A549 (cell line): ENCODE measurements at regions of chr17 and their contacts with region 1.

Region 1: DNA sequence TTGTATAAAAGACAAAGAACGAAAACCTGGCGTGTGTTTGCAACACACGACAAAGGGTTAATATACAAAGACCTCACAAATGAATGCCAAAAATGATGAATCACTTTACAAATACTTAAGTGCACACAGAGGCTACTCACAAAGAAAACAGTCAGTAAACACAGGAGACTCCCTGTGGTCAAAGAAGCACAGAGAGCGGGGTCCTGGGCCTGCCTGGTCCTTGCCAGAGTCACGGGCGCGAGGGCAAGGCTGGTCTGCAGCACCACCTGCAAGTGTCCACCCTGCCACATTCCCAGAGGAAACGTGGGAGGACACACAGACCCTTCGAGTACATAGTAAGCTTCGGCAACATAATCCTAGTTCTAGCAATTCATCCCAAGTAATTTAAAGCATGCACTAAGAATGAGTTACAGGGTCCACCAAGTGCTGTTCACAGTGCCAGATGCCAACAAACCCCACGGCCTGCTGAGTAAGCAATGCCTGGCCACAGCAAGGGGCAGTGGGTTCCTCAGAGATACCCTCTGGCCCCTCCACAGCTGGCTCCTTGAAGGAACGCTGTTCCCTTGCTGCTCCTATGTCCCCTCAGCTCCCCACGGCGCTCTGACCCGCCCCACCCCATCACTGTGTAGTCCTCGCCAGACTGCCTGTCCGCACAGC is 24.6 kb upstream of the FAAP100 start:
- DNase-seq: peak; percentile 89 to 99
- ATAC-seq: peak; percentile 86 to 91
- H3K4me3 ChIP-seq: peak overlapping the region; percentile 21; the same call in 2 of the 3 replicates
- H3K27ac ChIP-seq: peak overlapping the region; percentile 93 to 95
- H3K4me1 ChIP-seq: peaks cover 76% of the 10 kb centered on the region
- CTCF ChIP-seq: 0 out of 3 replicates have a peak, but pooled peaks have one; percentile 13
- EP300 ChIP-seq: peak in 1 of 2 experiments; percentile 67; a peak in 2 of 5 replicates
- POLR2A ChIP-seq: no peak
- RAD21 ChIP-seq: peak; percentile 43 to 57; a peak in 4 of 5 replicates

Region 2: DNA sequence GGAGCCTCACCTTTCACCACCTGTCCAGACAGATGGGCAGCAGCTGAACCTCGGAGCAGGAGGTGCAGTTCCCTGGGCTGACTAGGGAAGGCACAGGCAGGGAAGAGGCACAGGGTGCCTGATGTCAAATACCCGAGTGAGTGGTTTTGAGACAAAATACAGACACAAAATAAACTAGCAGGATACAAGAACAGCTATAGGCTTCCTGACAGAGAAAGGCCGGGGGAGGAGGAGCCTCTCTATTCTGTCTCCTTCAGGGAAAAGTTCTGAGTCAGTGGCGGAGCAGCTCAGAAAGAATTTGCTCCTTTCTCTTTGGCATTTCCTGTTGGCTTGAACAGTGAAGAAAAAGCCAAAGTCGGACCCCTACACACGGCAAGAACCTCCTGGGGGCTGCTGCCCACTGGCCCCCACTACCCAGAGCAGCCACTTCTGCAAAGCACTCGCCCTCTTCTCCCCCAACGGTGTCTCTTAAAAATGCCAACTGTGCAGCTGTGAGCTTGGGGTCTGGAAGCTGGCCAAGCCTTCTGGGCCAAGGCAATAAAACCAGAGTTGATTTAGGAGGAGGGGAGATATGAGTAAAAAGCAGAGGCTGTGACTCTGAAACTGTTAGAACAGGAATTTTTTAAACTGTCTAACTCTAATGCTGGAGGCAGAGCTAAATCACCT is 10.2 kb before region 1 on chr17:
- CTCF ChIA-PET with region 1: interaction called, 1,604 read pairs
- POLR2A ChIA-PET with region 1: interaction called, 32 read pairs
- DNase-seq: peak; percentile 85 to 89
- ATAC-seq: peak; percentile 85 to 91
- H3K4me3 ChIP-seq: peak overlapping the region; percentile 29; the same call in 2 of the 3 replicates
- H3K27ac ChIP-seq: peak overlapping the region; percentile 88 to 91
- H3K4me1 ChIP-seq: peaks cover 70% of the 10 kb centered on the region
- CTCF ChIP-seq: no peak
- EP300 ChIP-seq: peak; percentile 49 to 87; a peak in 3 of 5 replicates
- POLR2A ChIP-seq: no peak
- RAD21 ChIP-seq: peak; percentile 32 to 44